CD8-positive, alpha-beta T cell (primary cell): ENCODE measurements at regions of chr2 and their contacts with region 1.

Region 1: GRCh38 chr2:232286001-232286868 is 92.3 kb upstream of the ALPP start:
- DNase-seq: peak in 1 of 9 experiments; percentile 28
- ATAC-seq: peak; percentile 63
- H3K4me3 ChIP-seq: no peak overlapping the region
- H3K4me3 Mint-ChIP-seq: peak overlapping the region; percentile 26
- H3K27ac ChIP-seq: peak overlapping the region; percentile 13 to 62
- H3K27ac Mint-ChIP-seq: peak overlapping the region; percentile 94
- H3K4me1 ChIP-seq: peaks cover 47% of the 10 kb centered on the region
- H3K4me1 Mint-ChIP-seq: peaks cover 57% of the 10 kb centered on the region
- H3K27me3 ChIP-seq: no peaks in the 10 kb centered on the region
- H3K27me3 Mint-ChIP-seq: no peaks in the 10 kb centered on the region
- CTCF ChIP-seq: no peak

Region 2: DNA sequence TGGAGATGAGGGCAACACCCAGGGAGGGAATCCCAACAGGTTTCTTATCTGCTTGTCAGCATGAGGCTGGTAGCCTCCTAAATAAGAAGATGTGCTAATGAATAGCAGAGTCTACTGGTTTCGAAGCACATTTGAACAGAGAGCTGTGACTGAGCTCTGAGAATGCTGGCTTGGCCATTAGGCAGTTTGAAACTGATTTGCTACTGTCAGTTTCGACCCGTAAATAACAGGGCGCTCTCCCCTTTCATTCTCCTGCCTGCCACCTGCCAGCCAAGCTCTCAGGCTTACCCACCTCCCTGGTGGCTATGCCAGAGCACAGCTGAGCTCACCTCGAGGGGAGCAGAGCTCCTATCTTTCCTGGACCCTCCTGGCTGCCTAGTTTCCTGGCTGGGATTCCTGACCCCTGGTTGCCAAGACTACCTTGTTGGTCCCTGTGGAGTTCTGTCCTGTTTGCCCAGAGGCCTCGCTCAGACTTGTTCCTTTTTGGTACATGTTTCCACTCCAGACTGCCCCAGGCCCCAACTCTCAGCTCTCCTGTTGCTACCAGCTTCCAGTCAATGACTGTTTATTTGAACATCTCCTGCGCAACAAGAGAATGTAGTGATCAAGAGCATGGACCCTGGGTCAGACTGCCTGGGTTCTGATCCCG is 10.0 kb before region 1 on chr2:
- CTCF ChIA-PET with region 1: interaction called, 12 read pairs
- POLR2A ChIA-PET with region 1: interaction called, 4 read pairs
- intact Hi-C with region 1: no loop called
- DNase-seq: no peak
- ATAC-seq: no peak
- H3K4me3 ChIP-seq: no peak overlapping the region
- H3K4me3 Mint-ChIP-seq: no peak overlapping the region
- H3K27ac ChIP-seq: no peak overlapping the region
- H3K27ac Mint-ChIP-seq: no peak overlapping the region
- H3K4me1 ChIP-seq: no peaks in the 10 kb centered on the region
- H3K4me1 Mint-ChIP-seq: peaks cover 9% of the 10 kb centered on the region
- H3K27me3 ChIP-seq: no peaks in the 10 kb centered on the region
- H3K27me3 Mint-ChIP-seq: no peaks in the 10 kb centered on the region
- CTCF ChIP-seq: no peak

Region 3: DNA sequence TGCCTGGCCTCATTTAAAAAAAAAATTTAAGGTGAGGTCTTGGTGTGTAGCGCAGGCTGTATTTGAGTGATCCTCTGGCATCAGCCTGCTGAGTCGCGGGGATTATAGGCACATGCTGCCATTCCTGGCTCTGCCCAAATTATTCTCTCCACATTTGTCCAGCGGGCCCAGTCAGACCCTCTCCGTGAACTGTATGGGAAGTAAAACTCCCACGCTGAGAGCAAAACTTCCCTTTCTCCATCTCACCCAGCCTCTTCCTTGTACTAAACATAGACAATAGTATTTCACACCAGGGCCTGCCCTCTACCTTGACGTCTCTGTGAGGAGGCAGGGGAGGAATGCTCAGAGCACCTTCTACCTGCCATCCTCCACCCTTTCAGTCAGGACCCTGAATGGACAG is 301.3 kb after region 1 on chr2:
- CTCF ChIA-PET with region 1: no interaction called
- POLR2A ChIA-PET with region 1: no interaction called
- intact Hi-C with region 1: no loop called
- DNase-seq: no peak
- ATAC-seq: no peak
- H3K4me3 ChIP-seq: no peak overlapping the region
- H3K4me3 Mint-ChIP-seq: no peak overlapping the region
- H3K27ac ChIP-seq: no peak overlapping the region
- H3K27ac Mint-ChIP-seq: no peak overlapping the region
- H3K4me1 ChIP-seq: no peaks in the 10 kb centered on the region
- H3K4me1 Mint-ChIP-seq: no peaks in the 10 kb centered on the region
- H3K27me3 ChIP-seq: no peaks in the 10 kb centered on the region
- H3K27me3 Mint-ChIP-seq: no peaks in the 10 kb centered on the region
- CTCF ChIP-seq: no peak